ENCODE measurements at regions of chr22 and their contacts with region 1.

Region 1: GRCh38 chr22:45863981-45864751 is 112.8 kb downstream of the WNT7B start:
- DNase-seq: peak; percentile 23 to 38 (median 30)
- H3K4me3 ChIP-seq: no peak overlapping the region
- H3K4me3 Mint-ChIP-seq: peak overlapping the region in 1 of 2 donors; percentile 76
- H3K27ac ChIP-seq: no peak overlapping the region
- H3K27ac Mint-ChIP-seq: no peak overlapping the region
- H3K4me1 ChIP-seq: no peaks in the 10 kb centered on the region
- H3K4me1 Mint-ChIP-seq: no peaks in the 10 kb centered on the region
- H3K27me3 ChIP-seq: peaks cover 23 to 59% of the 10 kb centered on the region in 2 donors
- H3K27me3 Mint-ChIP-seq: peaks cover 49 to 67% (median 56%) of the 10 kb centered on the region in 3 donors
- CTCF ChIP-seq: peak; percentile 93

Region 2: GRCh38 chr22:46491923-46492322 is 627.8 kb after region 1 on chr22:
- intact Hi-C with region 1: loop called in 1 of 2 experiments (anchors 10 kb)
- DNase-seq: no peak
- H3K4me3 ChIP-seq: no peak overlapping the region
- H3K4me3 Mint-ChIP-seq: no peak overlapping the region
- H3K27ac ChIP-seq: no peak overlapping the region
- H3K27ac Mint-ChIP-seq: no peak overlapping the region
- H3K4me1 ChIP-seq: no peaks in the 10 kb centered on the region
- H3K4me1 Mint-ChIP-seq: no peaks in the 10 kb centered on the region
- H3K27me3 ChIP-seq: no peaks in the 10 kb centered on the region
- H3K27me3 Mint-ChIP-seq: peaks cover 3 to 13% (median 3%) of the 10 kb centered on the region in 3 donors
- CTCF ChIP-seq: no peak